GM12878 (cell line): ENCODE measurements at regions of chr1 and their contacts with region 1.

Region 1: GRCh38 chr1:62457955-62458354 is 21.1 kb downstream of the USP1 start:
- DNase-seq: no peak
- ATAC-seq: no peak; the same call in 2 of the 3 replicates
- H3K4me3 ChIP-seq: no peak overlapping the region
- H3K27ac ChIP-seq: no peak overlapping the region
- H3K4me1 ChIP-seq: no peaks in the 10 kb centered on the region
- H3K27me3 ChIP-seq: no peaks in the 10 kb centered on the region
- CTCF ChIP-seq: no peak
- EP300 ChIP-seq: no peak
- POLR2A ChIP-seq: no peak
- RAD21 ChIP-seq: no peak

Region 2: GRCh38 chr1:61588736-61589672 is 869.0 kb before region 1 on chr1:
- CTCF ChIA-PET with region 1: no interaction called
- POLR2A ChIA-PET with region 1: no interaction called
- RAD21 ChIA-PET with region 1: no interaction called
- SMC1A ChIA-PET with region 1: no interaction called
- in situ Hi-C with region 1: no loop called
- intact Hi-C with region 1: no loop called
- DNase-seq: peak; percentile 3
- ATAC-seq: peak; percentile 100
- H3K4me3 ChIP-seq: no peak overlapping the region
- H3K27ac ChIP-seq: no peak overlapping the region
- H3K4me1 ChIP-seq: no peaks in the 10 kb centered on the region
- H3K27me3 ChIP-seq: no peaks in the 10 kb centered on the region; a peak in 1 of 4 replicates
- CTCF ChIP-seq: peak; percentile 86 to 90 (median 87)
- EP300 ChIP-seq: no peak
- POLR2A ChIP-seq: no peak
- RAD21 ChIP-seq: peak; percentile 85

Region 3: GRCh38 chr1:62093261-62093660 is 364.7 kb before region 1 on chr1:
- CTCF ChIA-PET with region 1: no interaction called
- POLR2A ChIA-PET with region 1: no interaction called
- RAD21 ChIA-PET with region 1: no interaction called
- SMC1A ChIA-PET with region 1: no interaction called
- in situ Hi-C with region 1: no loop called
- intact Hi-C with region 1: no loop called
- DNase-seq: no peak
- ATAC-seq: no peak
- H3K4me3 ChIP-seq: no peak overlapping the region
- H3K27ac ChIP-seq: no peak overlapping the region
- H3K4me1 ChIP-seq: no peaks in the 10 kb centered on the region
- H3K27me3 ChIP-seq: no peaks in the 10 kb centered on the region
- CTCF ChIP-seq: no peak
- EP300 ChIP-seq: no peak
- POLR2A ChIP-seq: no peak
- RAD21 ChIP-seq: no peak

Region 4: DNA sequence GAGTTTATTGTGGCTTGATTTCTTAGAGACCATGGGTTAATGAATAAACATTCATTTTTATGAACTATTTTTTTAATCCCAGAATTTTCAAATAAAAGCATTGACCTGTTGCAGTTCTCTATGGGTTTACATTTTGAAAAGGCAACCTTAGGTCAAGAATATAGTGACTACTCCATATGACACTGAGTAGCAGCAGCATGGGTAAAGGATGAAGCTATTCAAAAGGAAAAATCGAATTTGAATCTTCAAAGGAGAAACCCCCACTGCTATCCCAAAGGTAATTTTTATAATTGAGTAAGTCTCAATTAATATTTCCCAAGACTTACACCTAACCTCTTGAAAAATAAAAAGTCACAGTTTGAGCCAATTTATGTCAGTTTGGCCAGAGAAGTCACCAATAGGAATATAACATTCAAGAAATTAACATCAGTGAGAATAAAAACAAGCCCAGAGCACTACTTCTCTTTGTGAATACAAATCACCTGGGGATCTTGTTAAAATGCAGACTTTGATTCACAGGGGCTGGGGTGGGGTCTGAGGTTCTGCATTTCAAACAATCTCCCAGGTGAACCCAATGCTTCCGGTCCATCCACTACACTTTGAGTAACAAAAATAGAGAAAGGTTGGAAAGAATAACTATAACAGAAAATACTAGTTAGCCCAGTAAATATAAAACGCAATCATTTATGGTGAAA is 18.7 kb after region 1 on chr1:
- CTCF ChIA-PET with region 1: no interaction called
- POLR2A ChIA-PET with region 1: no interaction called
- RAD21 ChIA-PET with region 1: no interaction called
- SMC1A ChIA-PET with region 1: no interaction called
- in situ Hi-C with region 1: no loop called
- intact Hi-C with region 1: no loop called
- DNase-seq: no peak
- ATAC-seq: no peak
- H3K4me3 ChIP-seq: no peak overlapping the region
- H3K27ac ChIP-seq: no peak overlapping the region
- H3K4me1 ChIP-seq: no peaks in the 10 kb centered on the region
- H3K27me3 ChIP-seq: no peaks in the 10 kb centered on the region
- CTCF ChIP-seq: no peak
- EP300 ChIP-seq: no peak
- POLR2A ChIP-seq: no peak
- RAD21 ChIP-seq: no peak

Region 5: DNA sequence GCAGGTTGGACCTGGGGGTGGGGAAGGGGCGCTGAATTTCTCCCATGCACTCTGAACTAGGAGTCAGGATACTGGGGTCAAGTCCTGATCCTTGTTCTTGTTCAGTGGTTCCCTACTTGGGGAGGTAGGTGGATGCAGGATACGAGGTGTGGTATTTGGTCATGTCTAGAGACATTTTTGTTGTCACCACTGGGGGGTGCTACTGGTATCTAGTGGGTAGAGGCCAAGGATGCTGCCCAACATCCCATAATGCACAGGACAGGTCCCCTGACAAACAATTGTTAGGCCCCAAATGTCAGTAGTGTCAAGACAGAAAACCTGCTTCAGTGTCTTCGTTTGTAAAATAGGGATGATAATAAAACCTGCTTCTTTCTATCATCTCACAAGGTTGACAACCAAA is 605.4 kb after region 1 on chr1:
- CTCF ChIA-PET with region 1: no interaction called
- POLR2A ChIA-PET with region 1: no interaction called
- RAD21 ChIA-PET with region 1: no interaction called
- SMC1A ChIA-PET with region 1: no interaction called
- in situ Hi-C with region 1: no loop called
- intact Hi-C with region 1: no loop called
- DNase-seq: no peak
- ATAC-seq: 0 out of 3 replicates have a peak, but pooled peaks have one; percentile 41
- H3K4me3 ChIP-seq: no peak overlapping the region
- H3K27ac ChIP-seq: no peak overlapping the region
- H3K4me1 ChIP-seq: no peaks in the 10 kb centered on the region
- H3K27me3 ChIP-seq: no peaks in the 10 kb centered on the region; a peak in 2 of 4 replicates
- CTCF ChIP-seq: peak; percentile 15 to 28 (median 25); a peak in 2 of 6 replicates
- EP300 ChIP-seq: no peak
- POLR2A ChIP-seq: no peak
- RAD21 ChIP-seq: peak; percentile 43

Region 6: DNA sequence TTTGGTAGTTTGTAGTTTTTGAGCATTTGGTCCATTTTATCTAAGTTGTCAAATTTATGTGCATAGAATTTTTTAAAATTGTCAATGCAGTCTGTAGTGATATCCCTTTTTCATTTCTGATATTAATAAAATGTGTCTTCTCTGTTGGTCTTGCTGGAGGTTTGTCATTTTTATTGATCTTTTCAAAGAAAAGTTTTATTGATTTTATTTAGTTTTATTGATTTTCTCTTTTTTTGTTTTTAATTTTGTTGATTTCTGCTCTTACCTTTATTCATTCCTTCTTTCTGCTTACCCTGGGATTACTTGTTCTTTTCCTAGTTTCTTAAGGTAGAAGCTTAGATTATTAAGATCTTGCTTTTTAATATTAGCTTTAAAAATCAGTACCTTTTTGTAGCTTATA is 1127.3 kb after region 1 on chr1:
- CTCF ChIA-PET with region 1: no interaction called
- POLR2A ChIA-PET with region 1: interaction called, 10 read pairs
- RAD21 ChIA-PET with region 1: no interaction called
- SMC1A ChIA-PET with region 1: no interaction called
- in situ Hi-C with region 1: no loop called
- intact Hi-C with region 1: no loop called
- DNase-seq: no peak
- ATAC-seq: no peak
- H3K4me3 ChIP-seq: no peak overlapping the region
- H3K27ac ChIP-seq: no peak overlapping the region
- H3K4me1 ChIP-seq: no peaks in the 10 kb centered on the region
- H3K27me3 ChIP-seq: no peaks in the 10 kb centered on the region
- CTCF ChIP-seq: no peak
- EP300 ChIP-seq: no peak
- POLR2A ChIP-seq: no peak
- RAD21 ChIP-seq: no peak